Activated B cell treated with CpG ODN at 0.5 μM for 24 hours (primary cell): ENCODE measurements at regions of chr18 and their contacts with region 1.

Region 1: GRCh38 chr18:26226229-26227005 is at the start of gene TAF4B:
- DNase-seq: peak; percentile 95
- ATAC-seq: peak; percentile 83
- H3K4me3 Mint-ChIP-seq: peak within 1 kb of the TSS; percentile 96
- H3K27ac Mint-ChIP-seq: peak within 1 kb of the TSS; percentile 97
- H3K4me1 Mint-ChIP-seq: peaks cover 22% of the 10 kb centered on the region
- H3K27me3 Mint-ChIP-seq: no peaks in the 10 kb centered on the region
- CTCF ChIP-seq: no peak
- total RNA-seq, gene TAF4B: 11.6 and 13.4 TPM in 2 replicates

Region 2: DNA sequence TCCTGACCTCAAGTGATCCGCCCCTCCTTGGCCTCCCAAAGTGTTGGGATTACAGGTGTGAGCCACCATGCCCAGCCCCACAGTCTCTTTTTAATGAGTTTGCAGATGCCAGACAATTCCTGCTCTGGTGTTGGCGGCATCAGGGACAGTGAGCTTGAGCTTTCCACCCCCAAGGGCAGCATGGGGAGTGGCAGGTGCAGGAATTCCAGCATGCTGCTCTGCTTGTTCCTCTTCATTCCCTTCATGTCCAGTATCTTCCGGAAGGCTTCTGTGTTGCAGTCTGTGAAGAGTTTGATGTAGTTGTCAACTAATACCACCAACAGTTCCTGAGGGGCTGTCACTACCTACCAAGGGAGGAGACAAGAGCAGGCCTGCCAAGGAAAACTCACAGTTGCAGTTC is 273.3 kb before region 1 on chr18:
- CTCF ChIA-PET with region 1: no interaction called
- POLR2A ChIA-PET with region 1: no interaction called
- intact Hi-C with region 1: no loop called
- DNase-seq: no peak
- ATAC-seq: no peak
- H3K4me3 Mint-ChIP-seq: no peak overlapping the region
- H3K27ac Mint-ChIP-seq: no peak overlapping the region
- H3K4me1 Mint-ChIP-seq: peaks cover 4% of the 10 kb centered on the region
- H3K27me3 Mint-ChIP-seq: peaks cover 3% of the 10 kb centered on the region
- CTCF ChIP-seq: no peak

Region 3: GRCh38 chr18:26203748-26204147 is 22.7 kb before region 1 on chr18:
- CTCF ChIA-PET with region 1: no interaction called
- POLR2A ChIA-PET with region 1: no interaction called
- intact Hi-C with region 1: no loop called
- DNase-seq: no peak
- ATAC-seq: no peak
- H3K4me3 Mint-ChIP-seq: no peak overlapping the region
- H3K27ac Mint-ChIP-seq: peak overlapping the region; percentile 0
- H3K4me1 Mint-ChIP-seq: peaks cover 3% of the 10 kb centered on the region
- H3K27me3 Mint-ChIP-seq: no peaks in the 10 kb centered on the region
- CTCF ChIP-seq: no peak

Region 4: GRCh38 chr18:26215247-26215970 is 11.0 kb before region 1 on chr18:
- CTCF ChIA-PET with region 1: no interaction called
- POLR2A ChIA-PET with region 1: interaction called, 14 read pairs
- intact Hi-C with region 1: loop called (anchors 1 kb)
- DNase-seq: no peak
- ATAC-seq: peak; percentile 90
- H3K4me3 Mint-ChIP-seq: peak overlapping the region; percentile 82
- H3K27ac Mint-ChIP-seq: peak overlapping the region; percentile 91
- H3K4me1 Mint-ChIP-seq: peaks cover 19% of the 10 kb centered on the region
- H3K27me3 Mint-ChIP-seq: no peaks in the 10 kb centered on the region
- CTCF ChIP-seq: no peak

Region 5: GRCh38 chr18:26255695-26256622 is 29.5 kb after region 1 on chr18:
- CTCF ChIA-PET with region 1: no interaction called
- POLR2A ChIA-PET with region 1: interaction called, 6 read pairs
- intact Hi-C with region 1: loop called (anchors 1 kb)
- DNase-seq: no peak
- ATAC-seq: peak; percentile 60
- H3K4me3 Mint-ChIP-seq: peak overlapping the region; percentile 51
- H3K27ac Mint-ChIP-seq: peak overlapping the region; percentile 72
- H3K4me1 Mint-ChIP-seq: peaks cover 53% of the 10 kb centered on the region
- H3K27me3 Mint-ChIP-seq: no peaks in the 10 kb centered on the region
- CTCF ChIP-seq: no peak